WTC11 (cell line): ENCODE measurements at regions of chr2 and their contacts with region 1.

Region 1: DNA sequence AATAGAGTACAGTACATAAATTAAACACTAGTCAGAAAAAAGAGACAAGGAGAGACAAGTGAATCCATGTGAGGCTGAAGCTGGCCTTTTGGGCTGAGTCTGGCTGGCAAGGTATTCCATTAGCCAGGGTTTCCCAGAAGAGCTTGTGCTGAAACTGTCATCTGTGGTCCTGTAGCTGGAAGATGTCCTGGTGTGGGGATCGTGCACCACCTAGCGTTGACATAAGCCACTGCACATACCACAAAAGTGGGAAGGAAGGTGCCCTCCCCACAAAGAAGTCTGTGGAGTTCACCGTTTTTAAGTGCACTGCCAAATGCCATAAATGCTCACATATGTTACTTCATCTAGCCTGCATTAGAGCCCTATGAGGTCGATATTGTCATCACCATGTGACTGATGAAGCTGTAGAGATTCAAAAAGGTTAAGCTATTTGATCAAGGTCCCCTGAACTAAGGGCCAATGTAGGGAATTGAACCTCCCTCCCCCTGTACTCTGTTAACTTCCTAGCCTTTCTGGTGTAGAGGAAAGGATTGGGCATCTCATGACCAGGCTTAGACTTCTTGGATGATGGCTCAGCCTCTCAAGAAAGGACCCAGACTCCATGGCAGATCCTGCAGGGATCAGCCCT is 31.9 kb upstream of the GALNT14 start:
- DNase-seq: peak; percentile 64
- ATAC-seq: peak; percentile 98
- H3K4me3 Mint-ChIP-seq: no peak overlapping the region
- H3K27ac Mint-ChIP-seq: no peak overlapping the region
- H3K4me1 Mint-ChIP-seq: no peaks in the 10 kb centered on the region
- H3K27me3 Mint-ChIP-seq: peaks cover 2% of the 10 kb centered on the region; the same call in 1 of the 2 replicates
- CTCF ChIP-seq: peak; percentile 83

Region 2: GRCh38 chr2:30997979-30998378 is 172.2 kb before region 1 on chr2:
- CTCF ChIA-PET with region 1: no interaction called
- POLR2A ChIA-PET with region 1: no interaction called
- DNase-seq: no peak
- ATAC-seq: no peak
- H3K4me3 Mint-ChIP-seq: no peak overlapping the region
- H3K27ac Mint-ChIP-seq: no peak overlapping the region
- H3K4me1 Mint-ChIP-seq: no peaks in the 10 kb centered on the region
- H3K27me3 Mint-ChIP-seq: no peaks in the 10 kb centered on the region
- CTCF ChIP-seq: no peak

Region 3: GRCh38 chr2:31033032-31033431 is 137.2 kb before region 1 on chr2:
- CTCF ChIA-PET with region 1: interaction called, 19 read pairs
- POLR2A ChIA-PET with region 1: no interaction called
- DNase-seq: no peak
- ATAC-seq: peak; percentile 82
- H3K4me3 Mint-ChIP-seq: no peak overlapping the region
- H3K27ac Mint-ChIP-seq: no peak overlapping the region
- H3K4me1 Mint-ChIP-seq: peaks cover 11% of the 10 kb centered on the region
- H3K27me3 Mint-ChIP-seq: no peaks in the 10 kb centered on the region
- CTCF ChIP-seq: no peak

Region 4: DNA sequence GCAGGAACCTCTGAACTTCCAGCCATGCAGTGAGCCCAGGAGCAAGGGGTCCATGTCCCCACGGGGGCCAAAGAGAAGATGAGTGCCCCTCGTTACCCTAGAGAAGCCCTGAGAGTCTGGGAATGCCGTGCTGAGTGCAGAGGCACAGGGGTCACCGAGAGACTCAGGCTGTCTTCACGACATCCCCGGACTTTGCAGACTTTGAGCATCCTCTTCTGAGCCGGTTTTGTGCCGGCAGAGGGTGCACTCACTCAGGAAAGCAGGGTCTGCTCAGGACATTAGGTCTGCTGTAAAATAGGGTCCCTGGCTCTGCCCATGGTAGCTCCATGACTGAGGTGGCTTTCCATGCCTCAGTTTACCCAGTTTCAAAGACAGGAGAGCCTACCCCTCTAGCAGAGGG is 102.9 kb before region 1 on chr2:
- CTCF ChIA-PET with region 1: interaction called, 11 read pairs
- POLR2A ChIA-PET with region 1: no interaction called
- DNase-seq: peak; percentile 19
- ATAC-seq: peak; percentile 53
- H3K4me3 Mint-ChIP-seq: no peak overlapping the region
- H3K27ac Mint-ChIP-seq: no peak overlapping the region
- H3K4me1 Mint-ChIP-seq: peaks cover 14% of the 10 kb centered on the region
- H3K27me3 Mint-ChIP-seq: no peaks in the 10 kb centered on the region
- CTCF ChIP-seq: no peak

Region 5: DNA sequence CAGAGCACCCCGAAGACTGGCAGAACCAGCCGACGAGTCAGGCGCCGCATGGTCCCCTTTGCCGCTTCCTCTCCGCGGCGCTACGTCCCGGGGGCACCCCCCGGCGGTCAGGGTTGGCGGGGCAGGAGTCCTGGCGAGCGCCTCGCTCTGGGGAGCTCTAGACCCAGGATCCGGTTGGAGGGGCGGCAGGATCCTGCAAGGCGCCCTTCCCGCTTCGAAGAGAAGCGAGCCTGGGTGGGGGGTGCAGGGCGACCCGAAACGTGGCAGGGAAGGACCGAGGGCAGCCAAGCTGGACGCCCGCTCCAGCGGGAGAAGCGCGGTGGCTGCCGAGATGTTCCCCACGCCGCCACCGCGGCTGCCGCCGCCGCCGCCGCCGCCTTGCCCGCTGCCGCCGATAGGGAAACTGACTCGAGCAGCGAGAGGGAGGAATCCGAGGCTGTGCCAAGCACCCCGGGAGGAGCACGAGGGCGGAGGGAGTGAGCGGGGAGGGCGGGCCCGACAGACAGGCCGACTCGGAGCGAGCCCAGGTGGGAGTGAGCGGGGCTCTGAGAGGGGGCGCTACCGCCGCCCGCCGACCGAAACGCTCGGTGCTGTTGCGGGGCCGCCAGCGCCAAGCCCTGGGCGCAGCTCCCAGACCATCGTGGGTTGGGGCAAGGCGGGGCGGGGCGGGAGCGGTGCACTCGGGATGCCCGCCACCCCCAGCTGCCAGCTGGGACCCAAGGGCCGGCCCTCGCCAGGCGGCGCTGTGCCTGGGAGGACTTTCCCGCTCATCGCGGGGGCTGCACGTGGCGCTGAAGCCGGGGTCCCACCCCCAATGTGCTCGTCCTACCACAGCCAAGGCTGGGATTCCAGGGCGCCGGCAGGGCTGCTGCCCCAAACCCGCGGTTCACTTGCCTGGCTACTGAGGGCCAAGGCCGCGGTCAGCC is 31.9 kb before region 1 on chr2 and contains the start of gene GALNT14:
- CTCF ChIA-PET with region 1: interaction called, 14 read pairs
- POLR2A ChIA-PET with region 1: no interaction called
- DNase-seq: peak; percentile 74
- ATAC-seq: peak; percentile 71
- H3K4me3 Mint-ChIP-seq: peak within 1 kb of the TSS; percentile 74
- H3K27ac Mint-ChIP-seq: no peak within 1 kb of the TSS
- H3K4me1 Mint-ChIP-seq: peaks cover 26% of the 10 kb centered on the region
- H3K27me3 Mint-ChIP-seq: peaks cover 78% of the 10 kb centered on the region
- CTCF ChIP-seq: 0 out of 2 replicates have a peak, but pooled peaks have one; percentile 13
- total RNA-seq, gene GALNT14: 6.0 to 6.8 TPM (median 6.3 TPM) in 3 replicates

Region 6: GRCh38 chr2:31192851-31193392 is 22.7 kb after region 1 on chr2:
- CTCF ChIA-PET with region 1: interaction called, 14 read pairs
- POLR2A ChIA-PET with region 1: no interaction called
- DNase-seq: peak; percentile 21
- ATAC-seq: peak; percentile 79
- H3K4me3 Mint-ChIP-seq: no peak overlapping the region
- H3K27ac Mint-ChIP-seq: no peak overlapping the region
- H3K4me1 Mint-ChIP-seq: peaks cover 11% of the 10 kb centered on the region
- H3K27me3 Mint-ChIP-seq: peaks cover 4% of the 10 kb centered on the region; the same call in 1 of the 2 replicates
- CTCF ChIP-seq: no peak

Region 7: DNA sequence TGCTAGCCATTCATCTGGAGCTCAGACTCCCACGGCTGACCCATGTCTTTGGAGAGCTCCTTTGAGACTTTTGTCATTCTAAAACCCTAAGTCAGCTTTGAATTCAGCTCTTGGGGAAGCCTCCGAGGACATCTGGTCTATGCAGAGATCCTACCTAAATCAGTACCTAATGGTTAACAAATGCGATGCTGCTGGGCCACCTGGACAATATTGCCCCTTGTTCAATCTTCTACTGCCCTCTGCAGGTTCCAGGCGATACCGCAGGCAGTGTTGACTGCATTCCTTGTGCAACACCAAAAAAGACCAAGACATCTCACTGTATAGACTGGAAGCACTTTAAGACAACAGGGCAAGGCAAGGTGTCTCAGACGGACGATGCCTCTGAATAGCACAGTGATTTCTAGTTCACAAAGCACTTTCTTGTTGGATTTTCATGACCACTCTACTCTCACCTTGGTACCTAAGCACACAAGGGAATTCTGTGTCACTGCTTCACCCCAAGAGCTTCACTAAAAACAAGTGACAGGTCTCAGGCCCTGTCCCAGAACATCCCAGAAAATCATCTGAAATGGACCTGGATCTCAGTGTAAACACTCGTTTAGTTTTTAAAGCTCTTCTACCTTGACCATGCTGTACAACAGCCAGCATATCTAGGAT is 163.5 kb after region 1 on chr2:
- CTCF ChIA-PET with region 1: interaction called, 20 read pairs
- POLR2A ChIA-PET with region 1: no interaction called
- DNase-seq: peak; percentile 93
- ATAC-seq: peak; percentile 93
- H3K4me3 Mint-ChIP-seq: no peak overlapping the region
- H3K27ac Mint-ChIP-seq: peak overlapping the region; percentile 87; the same call in 1 of the 2 replicates
- H3K4me1 Mint-ChIP-seq: peaks cover 26% of the 10 kb centered on the region
- H3K27me3 Mint-ChIP-seq: no peaks in the 10 kb centered on the region
- CTCF ChIP-seq: peak; percentile 87